GM10248 (cell line): ENCODE measurements at regions of chr6 and their contacts with region 1.

Region 1: GRCh38 chr6:3732345-3733141 is 19.0 kb downstream of the PXDC1 start:
- DNase-seq: peak; percentile 74
- CTCF ChIP-seq: peak; percentile 79

Region 2: GRCh38 chr6:3281631-3282475 is 450.7 kb before region 1 on chr6:
- CTCF ChIA-PET with region 1: interaction called, 112 read pairs
- POLR2A ChIA-PET with region 1: no interaction called
- DNase-seq: no peak
- CTCF ChIP-seq: no peak

Region 3: GRCh38 chr6:3721810-3722626 is 10.5 kb before region 1 on chr6:
- CTCF ChIA-PET with region 1: interaction called, 27 read pairs
- POLR2A ChIA-PET with region 1: no interaction called
- DNase-seq: no peak
- CTCF ChIP-seq: no peak

Region 4: DNA sequence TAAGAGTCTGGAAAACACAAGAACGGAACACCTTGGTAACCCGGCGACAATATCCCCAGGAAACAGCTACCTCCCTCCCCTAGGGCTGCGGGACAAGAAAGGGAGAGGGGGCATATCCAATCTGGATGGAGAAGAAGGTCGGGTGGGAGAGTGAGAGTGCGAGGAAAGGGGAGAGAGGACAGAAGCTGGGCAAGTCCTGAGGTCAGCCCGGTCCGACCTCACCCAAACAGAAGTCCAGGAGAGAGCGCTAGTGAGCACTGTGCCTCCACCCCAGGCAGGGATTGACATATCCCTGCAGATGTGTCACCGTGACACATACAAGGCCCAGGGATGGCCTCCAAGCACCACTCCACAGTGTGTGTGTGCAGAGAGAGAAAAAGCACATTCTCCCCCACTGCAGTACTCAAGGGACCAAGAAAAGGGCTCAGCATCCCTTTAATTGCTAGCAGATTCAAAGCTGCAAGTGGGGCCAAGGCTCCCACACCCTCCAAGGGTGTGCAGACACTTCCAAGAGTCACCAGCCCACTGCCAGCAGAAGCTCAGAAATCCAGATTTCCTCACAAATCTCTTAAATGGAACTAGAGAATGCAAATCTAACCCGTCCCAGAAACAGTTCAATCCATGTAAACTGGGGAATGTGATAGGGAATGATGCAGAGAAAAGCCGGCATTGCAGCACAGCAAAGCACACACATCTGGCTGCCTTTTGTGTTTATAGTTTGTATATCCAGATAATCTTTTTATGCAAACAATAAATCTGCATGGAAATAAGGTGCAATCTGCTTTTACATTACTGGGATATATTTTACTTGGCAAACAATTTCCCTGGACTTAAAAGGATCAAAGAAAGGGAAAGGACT is 15.9 kb after region 1 on chr6:
- CTCF ChIA-PET with region 1: interaction called, 11 read pairs
- POLR2A ChIA-PET with region 1: no interaction called
- DNase-seq: peak; percentile 66
- CTCF ChIP-seq: peak; percentile 68

Region 5: DNA sequence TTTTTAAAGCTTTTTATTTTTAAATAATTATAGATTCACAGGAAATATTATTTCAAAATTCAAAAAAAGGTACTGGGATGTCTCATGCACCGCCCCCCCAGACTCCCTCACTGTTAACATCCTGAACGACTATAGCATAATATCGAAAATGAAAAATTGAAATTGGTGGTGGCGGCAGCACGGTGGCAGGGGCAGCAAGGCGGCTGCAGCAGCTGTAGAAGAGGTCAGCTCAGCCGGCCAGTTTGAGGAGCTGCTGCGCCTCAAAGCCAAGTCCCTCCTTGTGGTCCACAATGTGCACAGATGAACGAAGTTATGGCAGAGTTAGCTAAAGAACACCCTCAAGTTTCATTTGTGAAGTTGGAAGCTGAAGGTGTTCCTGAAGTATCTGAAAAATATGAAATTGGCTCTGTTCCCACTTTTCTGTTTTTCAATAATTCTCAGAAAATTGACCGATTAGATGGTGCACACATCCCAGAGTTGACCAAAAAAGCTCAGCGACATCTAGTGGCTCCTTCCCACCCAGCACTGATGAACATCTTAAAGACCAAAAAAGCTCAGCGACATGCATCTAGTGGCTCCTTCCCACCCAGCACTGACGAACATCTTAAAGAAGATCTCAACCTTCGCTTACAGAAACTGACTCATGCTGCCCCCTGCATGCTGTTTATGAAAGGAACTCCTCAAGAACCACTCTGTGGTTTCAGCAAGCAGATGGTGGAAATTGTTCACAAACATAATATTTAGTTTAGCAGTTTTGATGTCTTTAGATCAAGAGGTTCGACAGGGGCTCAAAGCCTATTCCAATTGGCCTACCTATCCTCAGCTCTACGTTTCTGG is 245.6 kb after region 1 on chr6:
- CTCF ChIA-PET with region 1: interaction called, 10 read pairs
- POLR2A ChIA-PET with region 1: no interaction called
- DNase-seq: peak; percentile 41
- CTCF ChIP-seq: peak; percentile 63